A549 (cell line): ENCODE measurements at regions of chr10 and their contacts with region 1.

Region 1: GRCh38 chr10:112307358-112308124 is 24.3 kb downstream of the TECTB start:
- DNase-seq: peak; percentile 36 to 53
- ATAC-seq: peak; percentile 80 to 93
- H3K4me3 ChIP-seq: no peak overlapping the region
- H3K27ac ChIP-seq: no peak overlapping the region
- H3K4me1 ChIP-seq: peaks cover 5% of the 10 kb centered on the region; the same call in 1 of the 3 replicates
- CTCF ChIP-seq: peak; percentile 56
- EP300 ChIP-seq: no peak
- POLR2A ChIP-seq: no peak
- RAD21 ChIP-seq: peak; percentile 51 to 62

Region 2: DNA sequence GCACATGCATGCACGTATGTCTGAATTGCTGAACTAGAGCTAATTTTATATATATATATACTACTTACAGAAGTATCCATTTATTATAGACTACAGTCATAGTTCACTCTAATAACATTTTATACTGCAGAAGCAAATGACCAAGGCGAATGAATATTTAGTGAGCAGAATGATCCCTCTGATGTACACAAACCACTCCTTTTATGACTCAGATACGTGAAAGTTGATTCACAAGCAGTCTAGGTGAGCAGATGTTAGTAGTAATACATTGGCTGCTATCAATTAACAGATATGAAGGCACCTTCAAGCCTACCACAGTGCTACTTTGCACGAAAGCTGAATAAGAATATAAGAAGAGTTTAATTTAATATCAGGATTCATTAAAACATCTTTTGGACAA is 134.3 kb before region 1 on chr10:
- CTCF ChIA-PET with region 1: interaction called, 12 read pairs
- POLR2A ChIA-PET with region 1: no interaction called
- DNase-seq: no peak
- ATAC-seq: no peak
- H3K4me3 ChIP-seq: no peak overlapping the region
- H3K27ac ChIP-seq: no peak overlapping the region
- H3K4me1 ChIP-seq: no peaks in the 10 kb centered on the region
- CTCF ChIP-seq: no peak
- EP300 ChIP-seq: no peak
- POLR2A ChIP-seq: no peak
- RAD21 ChIP-seq: no peak

Region 3: GRCh38 chr10:112183329-112184051 is 124.1 kb before region 1 on chr10 and contains the start of gene GPAM:
- CTCF ChIA-PET with region 1: interaction called, 11 read pairs
- POLR2A ChIA-PET with region 1: interaction called, 5 read pairs
- DNase-seq: peak; percentile 68 to 89
- ATAC-seq: peak; percentile 97 to 99
- H3K4me3 ChIP-seq: peak within 1 kb of the TSS; percentile 93
- H3K27ac ChIP-seq: peak within 1 kb of the TSS; percentile 91 to 92
- H3K4me1 ChIP-seq: peaks cover 11% of the 10 kb centered on the region; the same call in 2 of the 3 replicates
- CTCF ChIP-seq: no peak
- EP300 ChIP-seq: no peak
- POLR2A ChIP-seq: peak; percentile 96
- RAD21 ChIP-seq: 0 out of 5 replicates have a peak, but pooled peaks of 1 of the 2 experiments have one; percentile 18
- polyA plus RNA-seq, gene GPAM: 11.3 and 13.3 TPM in 2 replicates

Region 4: GRCh38 chr10:112295853-112296830 is 11.4 kb before region 1 on chr10:
- CTCF ChIA-PET with region 1: interaction called, 15 read pairs
- POLR2A ChIA-PET with region 1: interaction called, 7 read pairs
- DNase-seq: no peak
- ATAC-seq: peak in 1 of 2 experiments; percentile 24; a peak in 2 of 6 replicates
- H3K4me3 ChIP-seq: no peak overlapping the region
- H3K27ac ChIP-seq: no peak overlapping the region
- H3K4me1 ChIP-seq: no peaks in the 10 kb centered on the region
- CTCF ChIP-seq: no peak
- EP300 ChIP-seq: no peak
- POLR2A ChIP-seq: no peak
- RAD21 ChIP-seq: no peak